Stomach (tissue), 19 donors: ENCODE measurements at regions of chr1 and their contacts with region 1.

Region 1: GRCh38 chr1:233440951-233441401 is 113.5 kb downstream of the MAP3K21 start:
- DNase-seq: peak in 1 of 2 donors; percentile 85
- H3K4me3 ChIP-seq: no peak overlapping the region
- H3K27ac ChIP-seq: no peak overlapping the region
- H3K4me1 ChIP-seq: peaks cover 0 to 7% (median 5%) of the 10 kb centered on the region in 4 donors
- H3K27me3 ChIP-seq: peaks cover 0 to 19% (median 0%) of the 10 kb centered on the region in 3 donors
- CTCF ChIP-seq: peak in 5 of 7 experiments; percentile 26 to 70 (median 51)
- EP300 ChIP-seq: no peak
- POLR2A ChIP-seq: no peak

Region 2: GRCh38 chr1:233782937-233783586 is 342.1 kb after region 1 on chr1:
- intact Hi-C with region 1: loop called (anchors 10 kb)
- DNase-seq: no peak
- H3K4me3 ChIP-seq: no peak overlapping the region
- H3K27ac ChIP-seq: no peak overlapping the region
- H3K4me1 ChIP-seq: no peaks in the 10 kb centered on the region
- H3K27me3 ChIP-seq: no peaks in the 10 kb centered on the region
- CTCF ChIP-seq: no peak
- EP300 ChIP-seq: no peak
- POLR2A ChIP-seq: no peak